Mammary epithelial cell (primary cell): ENCODE measurements at regions of chr1 and their contacts with region 1.

Region 1: DNA sequence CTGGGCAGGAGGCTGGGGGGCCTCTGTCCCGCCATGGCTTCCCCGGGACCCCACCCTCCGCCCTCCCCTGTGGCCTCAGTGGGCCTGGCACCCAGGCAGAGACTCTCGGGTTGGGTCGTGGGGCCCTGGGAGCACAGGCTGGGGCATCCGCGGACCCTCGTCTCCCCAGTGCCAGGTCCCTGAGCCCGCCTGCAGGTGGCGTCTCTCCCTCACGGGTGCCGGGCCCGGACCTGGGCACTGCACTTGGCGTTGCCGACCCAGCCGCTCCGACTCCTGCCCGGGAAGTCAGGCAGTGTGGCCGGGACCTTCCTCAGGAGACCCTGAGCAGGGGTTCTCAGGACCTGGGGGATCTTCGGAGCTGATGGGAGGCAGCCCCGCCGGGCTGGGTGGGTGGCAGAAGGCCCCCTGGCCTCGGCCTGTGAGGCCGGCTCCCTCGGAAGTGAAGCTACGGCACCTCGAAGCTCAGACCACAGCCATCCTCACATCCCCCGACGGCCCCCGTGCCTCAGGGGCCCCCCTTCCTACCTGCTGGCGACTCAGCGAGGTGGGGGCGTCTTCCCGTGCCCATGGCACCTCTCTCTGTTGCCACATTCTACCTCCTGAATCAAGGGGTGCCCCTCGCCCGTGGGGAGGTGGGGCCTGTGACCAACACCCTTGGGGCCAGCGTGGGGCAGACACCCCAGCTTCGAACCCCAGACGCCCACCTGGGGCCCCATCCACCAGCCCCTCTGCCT is 6.4 kb upstream of the C1orf159 start:
- DNase-seq: peak; percentile 51
- H3K4me3 ChIP-seq: peak overlapping the region; percentile 22 to 39 (median 32)
- H3K27ac ChIP-seq: no peak overlapping the region
- H3K4me1 ChIP-seq: peaks cover 9% of the 10 kb centered on the region
- H3K27me3 ChIP-seq: peaks cover 2% of the 10 kb centered on the region
- CTCF ChIP-seq: peak; percentile 69 to 92

Region 2: DNA sequence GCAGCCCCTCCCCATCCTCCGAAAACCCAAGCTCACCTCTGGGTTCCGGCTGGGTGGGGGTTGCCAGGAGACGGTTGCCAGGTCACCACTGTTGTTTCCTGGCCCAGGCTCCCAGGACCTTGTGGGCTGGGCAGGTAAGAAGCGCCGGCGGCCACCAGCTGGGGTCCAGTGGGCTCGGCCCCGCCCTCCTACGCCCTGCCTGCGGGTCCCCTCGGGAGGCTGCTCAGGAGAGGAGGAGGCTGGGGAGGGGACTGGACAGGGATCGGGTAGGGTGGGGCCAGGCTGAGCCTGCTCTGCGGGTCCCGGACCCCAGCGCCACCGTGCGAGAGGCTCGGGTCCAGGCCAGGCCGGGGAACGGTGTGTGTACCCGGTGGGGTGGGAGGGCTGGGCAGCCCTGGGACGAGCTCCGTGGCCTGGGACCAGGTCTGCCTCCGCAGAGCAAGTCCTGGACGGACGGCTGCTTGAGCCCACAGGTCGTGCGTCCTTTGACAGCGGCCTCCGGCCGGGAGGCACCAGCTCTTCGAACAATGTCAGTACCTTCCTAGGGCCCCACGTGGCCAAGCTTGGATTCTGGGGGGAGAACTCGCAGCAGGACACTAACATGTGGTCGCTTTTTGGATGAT is 51.7 kb after region 1 on chr1 and contains the start of gene TTLL10:
- CTCF ChIA-PET with region 1: no interaction called
- dilution Hi-C with region 1: loop called (anchors 5 kb)
- in situ Hi-C with region 1: no loop called
- intact Hi-C with region 1: no loop called
- DNase-seq: no peak
- H3K4me3 ChIP-seq: no peak within 1 kb of the TSS
- H3K27ac ChIP-seq: no peak within 1 kb of the TSS
- H3K4me1 ChIP-seq: peaks cover 8% of the 10 kb centered on the region
- H3K27me3 ChIP-seq: peaks cover 3% of the 10 kb centered on the region
- CTCF ChIP-seq: no peak
- total RNA-seq, gene TTLL10: not detected